GM10248 (cell line): ENCODE measurements at regions of chr11 and their contacts with region 1.

Region 1: GRCh38 chr11:9384535-9385303 is at the start of gene IPO7:
- DNase-seq: peak; percentile 94
- CTCF ChIP-seq: peak; percentile 19

Region 2: DNA sequence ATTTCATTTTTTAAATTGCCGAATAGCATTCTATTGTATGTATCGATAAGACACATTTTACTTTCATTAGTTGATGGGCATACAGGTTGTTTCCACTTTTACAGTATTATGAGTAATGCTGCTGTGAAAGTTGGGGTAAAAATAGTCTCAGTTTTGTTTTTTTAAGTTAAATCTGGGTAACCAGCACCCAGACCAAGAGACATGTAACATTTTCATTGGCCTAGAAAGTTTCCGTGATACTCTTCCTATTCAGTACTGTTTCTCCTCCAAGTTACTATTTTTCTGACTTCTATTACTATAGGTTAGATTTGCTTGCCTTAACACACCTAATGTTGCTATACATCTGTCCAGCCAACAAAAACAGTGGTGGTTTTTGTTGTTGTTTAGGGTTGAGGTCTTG is 12.0 kb after region 1 on chr11:
- CTCF ChIA-PET with region 1: interaction called, 10 read pairs
- POLR2A ChIA-PET with region 1: interaction called, 3 read pairs
- DNase-seq: peak; percentile 54
- CTCF ChIP-seq: no peak

Region 3: GRCh38 chr11:9460322-9461067 is 75.8 kb after region 1 on chr11 and contains the start of gene ZNF143:
- CTCF ChIA-PET with region 1: interaction called, 3 read pairs
- POLR2A ChIA-PET with region 1: interaction called, 10 read pairs
- DNase-seq: peak; percentile 95
- CTCF ChIP-seq: peak; percentile 45